ENCODE measurements at regions of chr9 and their contacts with region 1.

Region 1: DNA sequence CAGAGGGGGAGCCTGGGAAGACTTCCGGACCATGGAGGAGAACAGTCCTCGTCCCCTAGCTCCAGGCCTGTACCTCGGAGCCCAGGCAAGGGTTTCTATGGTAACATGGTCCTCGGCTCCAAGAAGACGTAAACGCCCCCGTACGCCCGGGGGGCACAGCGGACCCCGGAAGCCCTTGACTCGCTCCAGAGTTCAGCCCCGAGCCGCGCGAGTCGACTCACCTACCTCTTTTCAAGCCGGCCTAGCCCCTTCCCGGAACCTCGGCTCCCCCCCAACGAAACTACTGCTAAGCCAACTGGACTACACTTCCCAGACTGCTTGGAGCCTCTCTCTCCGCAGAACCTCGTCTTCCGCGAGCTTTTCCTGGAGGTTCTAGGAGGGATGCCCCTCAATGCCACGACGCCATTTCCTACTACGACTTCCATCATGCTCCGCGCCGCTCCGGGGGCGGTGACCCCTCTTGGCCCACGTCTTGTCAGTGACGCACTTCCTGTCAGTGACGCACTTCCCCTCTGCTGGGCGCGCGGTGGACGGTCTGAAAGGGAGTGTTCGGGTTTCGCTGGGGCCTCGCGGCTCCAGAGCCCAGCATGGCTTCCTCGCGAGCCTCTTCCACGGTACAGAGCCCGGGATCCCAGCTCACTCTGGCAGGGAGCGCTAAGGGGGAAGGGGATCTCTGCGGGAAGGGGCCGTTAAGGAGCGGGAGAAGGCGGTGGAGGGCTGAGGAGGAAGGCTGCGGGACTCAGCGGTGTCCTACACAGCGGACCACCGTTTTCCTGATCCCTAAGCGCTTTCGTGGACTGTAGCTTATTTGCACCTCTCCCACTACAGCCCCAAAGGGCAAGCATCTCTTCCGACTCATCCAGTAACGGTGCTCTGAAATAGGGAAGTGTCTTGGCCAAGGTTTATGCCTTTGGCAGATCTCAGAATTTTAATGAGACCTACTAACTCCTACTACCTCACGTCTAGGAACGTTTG is at the starts of genes CDC26 and PRPF4:
- DNase-seq: peak; percentile 85 to 95 (median 93)
- ATAC-seq: peak; percentile 97
- H3K4me3 ChIP-seq: peak within 1 kb of the TSS; percentile 87
- H3K4me3 Mint-ChIP-seq: no peak within 1 kb of the TSS
- H3K27ac ChIP-seq: peak within 1 kb of the TSS; percentile 98
- H3K27ac Mint-ChIP-seq: no peak within 1 kb of the TSS
- H3K4me1 ChIP-seq: peaks cover 8 to 16% of the 10 kb centered on the region in 2 donors
- H3K4me1 Mint-ChIP-seq: peaks cover 13 to 42% (median 34%) of the 10 kb centered on the region in 7 donors
- H3K27me3 ChIP-seq: no peaks in the 10 kb centered on the region
- H3K27me3 Mint-ChIP-seq: no peaks in the 10 kb centered on the region
- total RNA-seq, gene CDC26: 21.7 to 40.3 (median 34.4) TPM
- total RNA-seq, gene PRPF4: 17.4 to 36.9 (median 22.0) TPM

Region 2: GRCh38 chr9:113150670-113151611 is 124.5 kb before region 1 on chr9 and contains the start of gene SLC31A2:
- CTCF ChIA-PET with region 1: interaction called, 3 read pairs
- POLR2A ChIA-PET with region 1: no interaction called
- intact Hi-C with region 1: loop called (anchors 1 kb)
- DNase-seq: peak; percentile 73 to 93 (median 80)
- ATAC-seq: peak; percentile 92
- H3K4me3 ChIP-seq: peak within 1 kb of the TSS; percentile 78
- H3K4me3 Mint-ChIP-seq: peak within 1 kb of the TSS; percentile 58 to 88 (median 84)
- H3K27ac ChIP-seq: peak within 1 kb of the TSS; percentile 73
- H3K27ac Mint-ChIP-seq: peak within 1 kb of the TSS; percentile 38 to 76 (median 68)
- H3K4me1 ChIP-seq: peaks cover 10 to 15% of the 10 kb centered on the region in 2 donors
- H3K4me1 Mint-ChIP-seq: peaks cover 16 to 42% (median 36%) of the 10 kb centered on the region in 7 donors
- H3K27me3 ChIP-seq: no peaks in the 10 kb centered on the region
- H3K27me3 Mint-ChIP-seq: peaks cover 1 to 6% (median 4%) of the 10 kb centered on the region in 5 donors
- total RNA-seq, gene SLC31A2: 5.3 to 39.2 (median 5.4) TPM

Region 3: GRCh38 chr9:113238859-113239232 is 36.6 kb before region 1 on chr9:
- CTCF ChIA-PET with region 1: no interaction called
- POLR2A ChIA-PET with region 1: no interaction called
- intact Hi-C with region 1: no loop called
- DNase-seq: no peak
- ATAC-seq: no peak
- H3K4me3 ChIP-seq: no peak overlapping the region
- H3K4me3 Mint-ChIP-seq: no peak overlapping the region
- H3K27ac ChIP-seq: no peak overlapping the region
- H3K27ac Mint-ChIP-seq: no peak overlapping the region
- H3K4me1 ChIP-seq: no peaks in the 10 kb centered on the region
- H3K4me1 Mint-ChIP-seq: peaks cover 0 to 18% (median 2%) of the 10 kb centered on the region in 7 donors
- H3K27me3 ChIP-seq: no peaks in the 10 kb centered on the region
- H3K27me3 Mint-ChIP-seq: no peaks in the 10 kb centered on the region

Region 4: DNA sequence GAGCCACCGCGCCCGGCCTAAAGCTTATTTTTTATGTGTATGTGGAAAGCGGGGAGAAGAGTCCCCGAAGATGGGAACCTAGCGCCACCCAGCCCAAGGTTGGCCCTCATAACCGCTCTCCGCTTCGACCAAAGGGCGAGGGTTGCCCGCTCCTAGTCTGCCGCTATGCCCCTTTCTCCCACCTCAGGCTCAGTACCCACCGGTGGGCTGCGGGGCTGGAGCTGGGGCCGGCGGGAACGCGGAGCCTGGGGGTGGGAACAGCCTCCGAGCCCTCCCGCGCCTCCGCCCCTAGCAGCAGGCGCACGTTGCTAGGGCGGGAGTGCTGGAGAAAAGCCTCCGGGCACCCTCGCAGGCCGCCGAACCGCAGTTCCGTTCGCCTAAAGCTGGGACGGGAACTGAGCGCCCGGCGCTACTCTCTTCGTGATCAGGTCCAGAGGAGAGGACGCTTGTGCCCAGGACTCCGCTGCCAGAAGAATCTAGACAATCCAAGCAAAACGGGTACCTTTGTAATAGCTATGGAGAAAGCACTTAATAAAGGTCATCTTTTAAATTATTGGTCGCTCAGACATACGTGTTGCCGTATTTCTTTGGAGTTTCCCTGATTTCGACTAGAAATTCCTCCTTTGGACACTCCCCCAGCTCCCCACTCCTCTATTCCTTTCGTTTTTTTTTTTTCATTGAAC is 64.7 kb after region 1 on chr9 and contains the start of gene WDR31:
- CTCF ChIA-PET with region 1: interaction called, 7 read pairs
- POLR2A ChIA-PET with region 1: interaction called, 24 read pairs
- intact Hi-C with region 1: loop called (anchors 1 kb)
- DNase-seq: peak; percentile 52 to 85 (median 75)
- ATAC-seq: peak; percentile 98
- H3K4me3 ChIP-seq: peak within 1 kb of the TSS; percentile 86
- H3K4me3 Mint-ChIP-seq: peak within 1 kb of the TSS; percentile 72 to 91 (median 88)
- H3K27ac ChIP-seq: peak within 1 kb of the TSS; percentile 62
- H3K27ac Mint-ChIP-seq: peak within 1 kb of the TSS; percentile 2 to 85 (median 62)
- H3K4me1 ChIP-seq: peaks cover 4 to 20% of the 10 kb centered on the region in 2 donors
- H3K4me1 Mint-ChIP-seq: peaks cover 12 to 54% (median 30%) of the 10 kb centered on the region in 7 donors
- H3K27me3 ChIP-seq: no peaks in the 10 kb centered on the region
- H3K27me3 Mint-ChIP-seq: peaks cover 0 to 7% (median 0%) of the 10 kb centered on the region in 5 donors
- total RNA-seq, gene WDR31: 0.27 to 1.7 (median 1.0) TPM

Region 5: GRCh38 chr9:113401027-113401792 is 125.8 kb after region 1 on chr9 and contains the start of gene ALAD:
- CTCF ChIA-PET with region 1: interaction called, 10 read pairs
- POLR2A ChIA-PET with region 1: interaction called, 7 read pairs
- intact Hi-C with region 1: loop called (anchors 1 kb)
- DNase-seq: peak; percentile 99 to 100 (median 99)
- ATAC-seq: peak; percentile 99
- H3K4me3 ChIP-seq: peak within 1 kb of the TSS; percentile 82
- H3K4me3 Mint-ChIP-seq: peak within 1 kb of the TSS; percentile 89 to 96 (median 95)
- H3K27ac ChIP-seq: peak within 1 kb of the TSS; percentile 74
- H3K27ac Mint-ChIP-seq: peak within 1 kb of the TSS; percentile 81 to 91 (median 87)
- H3K4me1 ChIP-seq: peaks cover 12 to 13% of the 10 kb centered on the region in 2 donors
- H3K4me1 Mint-ChIP-seq: peaks cover 18 to 37% (median 25%) of the 10 kb centered on the region in 7 donors
- H3K27me3 ChIP-seq: no peaks in the 10 kb centered on the region
- H3K27me3 Mint-ChIP-seq: no peaks in the 10 kb centered on the region
- total RNA-seq, gene ALAD: 25.1 to 45.5 (median 39.1) TPM

Region 6: GRCh38 chr9:113591001-113591898 is 315.8 kb after region 1 on chr9:
- CTCF ChIA-PET with region 1: interaction called, 7 read pairs
- POLR2A ChIA-PET with region 1: no interaction called
- intact Hi-C with region 1: loop called (anchors 1 to 2 kb)
- DNase-seq: peak in 6 of 9 donors; percentile 30 to 75 (median 38)
- ATAC-seq: peak; percentile 58
- H3K4me3 ChIP-seq: no peak overlapping the region
- H3K4me3 Mint-ChIP-seq: no peak overlapping the region
- H3K27ac ChIP-seq: no peak overlapping the region
- H3K27ac Mint-ChIP-seq: peak overlapping the region in 1 of 9 donors; percentile 45
- H3K4me1 ChIP-seq: peaks cover 5 to 8% of the 10 kb centered on the region in 2 donors
- H3K4me1 Mint-ChIP-seq: peaks cover 20 to 47% (median 23%) of the 10 kb centered on the region in 7 donors
- H3K27me3 ChIP-seq: no peaks in the 10 kb centered on the region
- H3K27me3 Mint-ChIP-seq: no peaks in the 10 kb centered on the region